AG04449 (cell line): ENCODE measurements at regions of chr9 and their contacts with region 1.

Region 1: DNA sequence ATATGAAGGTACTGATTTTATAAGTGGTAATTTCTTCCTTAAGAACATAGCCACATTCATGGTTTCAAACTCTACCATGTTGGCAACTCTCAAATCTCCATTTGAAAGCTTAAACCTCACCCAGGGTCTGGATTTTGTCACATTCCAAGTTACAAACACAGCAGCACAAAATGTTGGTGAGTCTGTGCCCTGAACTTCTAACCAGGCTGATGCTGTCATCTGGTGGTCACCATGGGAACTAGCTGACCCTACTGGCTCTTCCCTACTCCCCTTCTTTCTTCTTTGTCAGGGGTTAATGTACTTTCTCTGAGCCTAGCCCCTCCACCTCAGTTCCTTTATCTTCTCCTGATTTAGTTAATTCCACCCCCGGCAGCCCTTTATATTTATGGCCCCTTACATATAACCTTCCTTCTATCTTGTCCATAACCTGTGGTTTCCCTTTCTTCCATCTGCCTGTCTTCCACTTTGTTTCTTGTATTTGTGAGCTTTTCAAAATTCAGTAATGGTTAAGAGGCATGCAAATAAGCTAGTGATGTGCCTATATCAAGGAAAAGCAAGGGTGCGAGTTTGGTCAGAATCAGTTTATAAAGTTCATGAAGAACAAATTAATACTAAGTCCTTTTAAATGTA is 35.9 kb downstream of the TGFBR1 start:
- DNase-seq: no peak
- H3K4me3 ChIP-seq: no peak overlapping the region
- CTCF ChIP-seq: peak; percentile 84

Region 2: DNA sequence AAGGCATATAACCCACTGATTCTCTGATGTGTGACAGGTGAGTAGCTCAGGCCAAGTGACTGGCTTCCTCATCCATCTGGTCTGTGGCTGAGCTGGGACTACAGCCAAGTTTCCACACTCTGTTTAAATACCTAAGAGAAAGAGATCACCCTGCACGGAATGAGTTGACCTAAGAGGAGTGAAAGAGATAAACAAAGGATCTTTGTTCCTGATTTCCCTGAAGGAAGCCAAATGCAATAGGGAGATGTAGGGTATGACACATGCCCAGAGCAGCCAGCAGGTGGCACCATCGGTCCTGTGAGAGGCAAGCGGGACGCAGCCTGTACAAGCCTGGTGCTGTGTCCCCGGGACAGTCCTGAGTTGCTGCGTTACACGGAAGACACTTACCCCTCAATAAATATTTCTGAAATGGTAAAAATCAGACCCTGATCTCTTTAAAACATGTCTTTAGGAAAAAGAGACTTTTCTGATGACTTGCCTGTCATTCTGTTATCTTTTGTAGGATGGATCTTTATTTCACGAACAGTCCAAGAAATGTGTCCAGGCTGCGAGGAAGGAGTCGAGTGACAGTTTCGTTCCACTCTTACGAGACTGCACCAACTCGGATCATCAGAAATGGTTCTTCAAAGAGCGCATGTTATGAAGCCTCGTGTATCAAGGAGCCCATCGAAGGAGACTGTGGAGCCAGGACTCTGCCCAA is 292.2 kb before region 1 on chr9:
- CTCF ChIA-PET with region 1: interaction called, 37 read pairs
- POLR2A ChIA-PET with region 1: no interaction called
- DNase-seq: peak; percentile 23
- H3K4me3 ChIP-seq: peak overlapping the region; percentile 31
- CTCF ChIP-seq: peak; percentile 91

Region 3: DNA sequence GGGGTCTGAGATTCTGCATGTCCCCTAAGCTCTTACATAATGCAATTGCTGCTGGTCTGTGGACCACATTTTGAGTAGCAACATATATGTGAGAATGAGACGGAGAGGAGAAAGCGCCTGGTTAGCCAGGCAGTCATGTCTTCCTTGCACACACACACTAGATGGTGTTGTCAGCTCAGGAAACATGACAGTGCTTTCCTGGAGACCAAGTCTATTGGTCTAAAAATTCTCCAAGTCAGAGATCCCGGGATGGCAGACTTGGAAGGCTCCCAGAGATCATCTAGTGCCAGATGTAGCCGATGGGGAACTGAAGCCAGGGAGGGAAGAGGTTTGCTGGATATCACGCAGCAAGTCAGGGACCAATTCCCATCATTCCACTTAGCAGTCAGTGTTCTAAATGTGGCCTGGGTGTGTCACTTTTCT is 279.9 kb before region 1 on chr9:
- CTCF ChIA-PET with region 1: interaction called, 58 read pairs
- POLR2A ChIA-PET with region 1: no interaction called
- DNase-seq: peak; percentile 73
- H3K4me3 ChIP-seq: no peak overlapping the region
- CTCF ChIP-seq: peak; percentile 66

Region 4: GRCh38 chr9:98974994-98975712 is 165.6 kb before region 1 on chr9:
- CTCF ChIA-PET with region 1: interaction called, 86 read pairs
- POLR2A ChIA-PET with region 1: no interaction called
- DNase-seq: no peak
- H3K4me3 ChIP-seq: peak overlapping the region; percentile 38
- CTCF ChIP-seq: peak; percentile 100

Region 5: GRCh38 chr9:99019790-99020331 is 120.9 kb before region 1 on chr9:
- CTCF ChIA-PET with region 1: interaction called, 17 read pairs
- POLR2A ChIA-PET with region 1: no interaction called
- DNase-seq: peak; percentile 94
- H3K4me3 ChIP-seq: no peak overlapping the region
- CTCF ChIP-seq: no peak

Region 6: DNA sequence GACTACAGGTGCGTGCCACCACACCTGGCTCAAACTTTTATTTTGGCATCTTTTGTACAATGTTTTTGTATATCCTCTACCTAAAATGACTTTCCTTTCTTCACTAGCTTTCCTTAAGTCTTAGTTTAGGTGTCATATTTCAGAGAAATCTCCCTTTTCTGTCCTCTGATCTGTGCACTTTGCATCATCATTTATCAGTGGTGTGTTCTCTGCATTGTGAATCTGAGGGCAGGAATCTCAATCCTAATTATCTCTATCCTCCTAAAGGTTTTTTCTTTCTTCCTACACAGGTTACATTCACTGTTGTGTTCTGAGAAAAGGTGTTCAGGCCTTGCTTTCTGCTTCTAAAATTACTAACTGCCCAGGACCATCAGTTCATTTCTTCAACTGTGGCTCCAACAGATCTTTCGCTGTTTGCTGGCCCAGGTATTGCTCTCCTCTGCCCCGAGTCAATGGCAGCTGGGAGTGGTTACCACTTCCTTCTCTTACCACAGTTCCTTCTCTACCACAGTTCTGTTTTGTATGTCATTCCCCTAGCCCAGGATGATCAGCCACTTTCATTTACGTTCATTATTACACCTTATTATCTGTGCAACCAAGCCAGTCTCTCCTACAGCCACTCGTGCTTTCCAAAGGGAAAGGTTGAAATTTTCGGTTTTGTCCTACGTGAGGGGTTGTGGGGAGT is 21.9 kb before region 1 on chr9:
- CTCF ChIA-PET with region 1: interaction called, 19 read pairs
- POLR2A ChIA-PET with region 1: no interaction called
- DNase-seq: no peak
- H3K4me3 ChIP-seq: no peak overlapping the region
- CTCF ChIP-seq: no peak

Region 7: DNA sequence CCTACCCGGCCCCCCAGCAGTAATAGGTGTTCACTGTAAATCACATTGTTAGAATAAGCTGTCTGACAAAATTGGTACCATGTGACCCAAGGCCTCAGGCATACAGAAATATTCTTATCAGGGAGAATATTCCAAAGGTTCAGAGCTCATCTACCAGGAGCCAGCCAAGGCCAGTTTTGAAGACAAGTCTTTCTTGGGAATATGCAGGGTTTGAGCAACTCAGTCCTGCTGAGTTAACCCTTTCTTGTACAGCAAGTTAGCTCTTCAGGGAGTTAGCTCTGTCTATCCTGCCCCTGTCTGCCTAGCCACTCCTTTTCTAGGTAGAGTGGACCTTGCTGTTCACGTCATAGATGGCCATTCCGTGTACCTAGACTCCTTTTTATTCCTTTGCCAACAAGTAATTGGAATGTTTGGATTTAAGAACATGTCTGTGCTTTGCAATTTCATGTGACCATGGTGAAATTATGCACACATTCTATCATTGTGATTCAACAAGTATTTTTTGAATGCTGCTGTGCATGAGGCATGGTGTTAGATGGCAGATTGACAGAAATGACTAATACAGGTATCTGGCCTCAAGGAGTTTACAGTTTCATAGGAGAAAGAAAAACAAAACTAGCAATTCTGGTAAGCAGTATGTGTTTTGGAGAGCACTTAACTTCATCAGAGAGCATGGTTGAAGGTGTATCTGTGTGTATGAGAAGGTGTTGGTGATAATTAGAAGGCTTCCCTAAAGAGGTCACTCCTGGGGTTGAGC is 13.2 kb before region 1 on chr9:
- CTCF ChIA-PET with region 1: interaction called, 11 read pairs
- POLR2A ChIA-PET with region 1: no interaction called
- DNase-seq: no peak
- H3K4me3 ChIP-seq: no peak overlapping the region
- CTCF ChIP-seq: no peak

Region 8: GRCh38 chr9:99445371-99445891 is 304.6 kb after region 1 on chr9:
- CTCF ChIA-PET with region 1: no interaction called
- POLR2A ChIA-PET with region 1: no interaction called
- DNase-seq: peak; percentile 83
- H3K4me3 ChIP-seq: no peak overlapping the region
- CTCF ChIP-seq: no peak